ENCODE measurements at regions of chr2 and their contacts with region 1.

Region 1: GRCh38 chr2:220006152-220006621 is 378.8 kb downstream of the SLC4A3 start:
- DNase-seq: no peak
- H3K4me3 ChIP-seq: no peak overlapping the region
- H3K27ac ChIP-seq: no peak overlapping the region
- H3K4me1 ChIP-seq: no peaks in the 10 kb centered on the region
- CTCF ChIP-seq: no peak

Region 2: GRCh38 chr2:219987830-219988229 is 18.4 kb before region 1 on chr2:
- CTCF ChIA-PET with region 1: no interaction called
- POLR2A ChIA-PET with region 1: no interaction called
- intact Hi-C with region 1: no loop called
- DNase-seq: no peak
- H3K4me3 ChIP-seq: no peak overlapping the region
- H3K27ac ChIP-seq: no peak overlapping the region
- H3K4me1 ChIP-seq: no peaks in the 10 kb centered on the region
- CTCF ChIP-seq: no peak

Region 3: DNA sequence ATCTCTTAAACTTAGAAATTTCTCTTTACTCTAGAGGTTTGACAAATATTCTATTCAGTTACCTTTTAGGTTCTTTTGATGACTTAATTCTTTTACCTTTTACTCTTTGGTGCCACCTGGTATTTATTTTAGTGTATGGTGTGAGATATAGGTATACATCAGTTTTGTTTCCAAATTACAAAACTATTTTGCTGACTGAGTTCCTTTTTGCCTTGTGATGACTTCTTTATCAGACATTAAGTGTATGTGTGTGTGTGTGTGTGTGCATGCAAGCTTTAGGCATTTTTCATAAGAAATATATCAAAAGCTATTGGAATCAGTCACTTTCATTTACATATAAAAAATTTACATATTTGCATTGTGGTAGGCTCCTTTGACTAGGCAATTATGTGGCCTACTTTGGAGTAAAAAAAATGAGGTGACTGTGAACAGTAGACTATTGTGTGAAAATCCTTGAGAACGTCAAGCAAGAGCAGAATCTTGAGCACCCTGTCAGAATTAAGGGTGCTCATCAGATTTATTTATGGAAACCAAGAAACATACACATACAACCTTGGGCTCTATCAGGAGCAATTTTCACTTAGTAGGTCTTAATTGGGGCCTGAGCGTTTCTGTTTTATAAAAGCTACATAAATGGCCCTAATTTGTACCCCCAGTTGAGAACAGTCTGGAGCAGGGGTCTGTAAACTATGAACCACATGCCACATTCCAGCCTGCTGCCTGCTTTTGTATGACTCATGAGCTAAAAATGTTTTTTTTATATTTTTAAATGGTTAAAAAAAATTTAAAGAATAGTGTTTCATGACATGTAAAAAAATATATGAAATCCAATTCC is 37.2 kb after region 1 on chr2:
- CTCF ChIA-PET with region 1: no interaction called
- POLR2A ChIA-PET with region 1: no interaction called
- intact Hi-C with region 1: loop called (anchors 1 kb)
- DNase-seq: no peak
- H3K4me3 ChIP-seq: no peak overlapping the region
- H3K27ac ChIP-seq: no peak overlapping the region
- H3K4me1 ChIP-seq: no peaks in the 10 kb centered on the region
- CTCF ChIP-seq: no peak